Transverse colon (tissue), 4 donors: ENCODE measurements at regions of chr17 and their contacts with region 1.

Region 1: GRCh38 chr17:40791787-40792436 is 7.8 kb downstream of the KRT28 start:
- DNase-seq: no peak
- H3K4me3 ChIP-seq: no peak overlapping the region
- H3K27ac ChIP-seq: no peak overlapping the region
- H3K4me1 ChIP-seq: no peaks in the 10 kb centered on the region
- H3K27me3 ChIP-seq: peaks cover 36% of the 10 kb centered on the region
- CTCF ChIP-seq: peak; percentile 30 to 53 (median 38)
- EP300 ChIP-seq: no peak
- POLR2A ChIP-seq: no peak

Region 2: DNA sequence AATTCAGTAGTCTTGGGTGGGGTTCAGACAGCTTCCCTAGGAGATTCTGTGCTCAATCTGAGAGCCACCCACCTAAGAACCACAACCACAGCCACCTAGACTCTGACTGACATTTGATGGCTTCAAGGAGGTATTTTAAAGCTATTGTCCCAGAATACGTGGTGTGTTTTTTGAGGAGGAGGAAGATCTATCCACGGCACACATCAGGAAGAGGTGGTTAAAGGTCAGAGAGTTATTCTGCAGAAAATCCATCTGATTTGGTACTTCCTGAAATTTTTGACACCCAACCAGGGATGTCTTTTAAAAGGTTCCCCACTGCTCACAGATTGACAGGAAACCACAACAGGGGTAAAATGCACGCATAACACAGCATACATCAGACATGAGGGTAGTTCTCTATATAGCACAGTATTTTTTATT is 169.4 kb before region 1 on chr17:
- in situ Hi-C with region 1: loop called (anchors 5 to 25 kb)
- intact Hi-C with region 1: no loop called
- DNase-seq: no peak
- H3K4me3 ChIP-seq: no peak overlapping the region
- H3K27ac ChIP-seq: peak overlapping the region in 1 of 4 donors; percentile 19
- H3K4me1 ChIP-seq: peaks cover 0 to 22% (median 14%) of the 10 kb centered on the region in 4 donors
- H3K27me3 ChIP-seq: no peaks in the 10 kb centered on the region
- CTCF ChIP-seq: no peak
- EP300 ChIP-seq: no peak
- POLR2A ChIP-seq: no peak

Region 3: DNA sequence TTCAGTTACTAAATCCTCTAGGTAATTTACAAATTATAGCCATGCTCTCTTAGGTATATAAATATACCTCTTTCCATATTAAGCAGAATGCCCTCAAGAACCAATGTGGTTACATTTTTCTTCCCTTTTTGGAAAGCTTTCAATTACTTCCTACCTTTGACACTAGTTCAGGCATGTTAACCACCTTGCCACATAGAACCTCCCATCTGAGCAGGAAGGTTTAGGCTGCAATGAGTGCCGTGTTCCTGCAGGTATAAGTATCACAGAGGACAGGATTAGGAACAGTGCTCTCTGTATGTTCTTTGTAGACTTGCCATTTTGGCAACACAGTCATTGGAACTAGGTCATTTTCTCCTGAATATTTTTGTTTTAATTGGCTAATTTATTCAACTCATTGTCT is 56.9 kb before region 1 on chr17:
- in situ Hi-C with region 1: no loop called
- intact Hi-C with region 1: no loop called
- DNase-seq: no peak
- H3K4me3 ChIP-seq: no peak overlapping the region
- H3K27ac ChIP-seq: no peak overlapping the region
- H3K4me1 ChIP-seq: no peaks in the 10 kb centered on the region
- H3K27me3 ChIP-seq: peaks cover 7% of the 10 kb centered on the region
- CTCF ChIP-seq: no peak
- EP300 ChIP-seq: no peak
- POLR2A ChIP-seq: no peak